Activated naive CD4-positive, alpha-beta T cell treated with anti-CD3 and anti-CD28 coated beads for 36 hours (primary cell): ENCODE measurements at regions of chr7 and their contacts with region 1.

Region 1: DNA sequence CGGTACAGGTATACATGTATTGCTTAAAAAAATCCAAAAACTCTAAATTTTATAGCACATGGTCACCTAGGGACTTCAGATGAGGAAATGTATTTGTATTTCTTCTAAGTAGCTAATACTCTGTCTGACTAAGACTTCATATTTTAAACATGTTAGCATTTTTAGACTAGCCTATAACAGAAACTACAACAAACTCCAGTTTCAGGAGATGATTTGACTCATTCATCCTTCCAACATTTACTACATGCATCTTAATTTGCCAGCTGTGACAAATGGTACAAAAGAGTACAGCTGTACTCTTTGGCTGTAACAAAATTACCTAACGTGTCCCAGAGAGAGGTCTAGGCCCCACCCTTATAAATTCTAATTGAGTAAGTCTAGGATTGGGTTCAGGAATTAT is 22.2 kb downstream of the TMEM209 start:
- DNase-seq: no peak
- H3K4me3 Mint-ChIP-seq: no peak overlapping the region
- H3K27ac Mint-ChIP-seq: peak overlapping the region; percentile 65
- H3K4me1 Mint-ChIP-seq: peaks cover 30% of the 10 kb centered on the region
- H3K27me3 Mint-ChIP-seq: no peaks in the 10 kb centered on the region

Region 2: DNA sequence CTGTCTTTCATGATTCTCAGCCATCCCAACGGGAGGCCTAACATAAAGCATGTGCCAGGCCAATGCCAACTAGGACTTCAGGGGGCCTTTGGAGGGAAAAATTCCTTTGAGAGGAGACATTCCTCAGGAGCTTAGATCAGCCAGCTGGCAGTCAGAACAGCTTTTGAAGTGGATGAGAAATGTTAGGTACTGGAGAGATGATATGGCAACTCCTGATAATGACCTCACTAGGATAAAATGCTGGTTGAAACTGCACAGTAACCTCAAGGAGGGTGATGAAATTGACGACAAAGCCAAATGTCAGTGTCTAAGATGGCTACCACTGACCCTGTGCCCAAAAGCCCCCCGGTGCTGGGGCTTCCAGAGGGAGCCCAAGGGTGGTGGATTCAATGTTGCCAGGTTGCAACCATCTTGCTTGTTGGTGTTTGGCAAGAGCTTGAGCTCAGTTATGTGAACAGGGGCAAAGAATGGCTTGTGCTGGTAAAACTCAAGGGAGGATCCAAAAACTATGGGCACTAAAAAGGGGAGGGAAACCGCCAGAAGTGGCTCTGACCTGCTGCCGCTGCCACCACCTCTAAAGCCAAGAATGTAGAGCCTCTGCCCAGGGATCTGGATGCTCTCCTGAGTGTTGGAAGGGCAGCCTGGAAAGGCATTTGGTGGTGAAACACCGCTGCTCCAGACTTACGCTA is 351.4 kb before region 1 on chr7:
- CTCF ChIA-PET with region 1: no interaction called
- intact Hi-C with region 1: no loop called
- DNase-seq: no peak
- H3K4me3 Mint-ChIP-seq: no peak overlapping the region
- H3K27ac Mint-ChIP-seq: no peak overlapping the region
- H3K4me1 Mint-ChIP-seq: peaks cover 13% of the 10 kb centered on the region
- H3K27me3 Mint-ChIP-seq: no peaks in the 10 kb centered on the region

Region 3: GRCh38 chr7:130205084-130205947 is 22.3 kb after region 1 on chr7 and contains the start of gene TMEM209:
- CTCF ChIA-PET with region 1: interaction called, 4 read pairs
- intact Hi-C with region 1: loop called (anchors 1 kb)
- DNase-seq: peak; percentile 97
- H3K4me3 Mint-ChIP-seq: peak within 1 kb of the TSS; percentile 98
- H3K27ac Mint-ChIP-seq: peak within 1 kb of the TSS; percentile 98
- H3K4me1 Mint-ChIP-seq: peaks cover 33% of the 10 kb centered on the region
- H3K27me3 Mint-ChIP-seq: no peaks in the 10 kb centered on the region
- total RNA-seq, gene TMEM209: 36.0 to 37.3 TPM

Region 4: DNA sequence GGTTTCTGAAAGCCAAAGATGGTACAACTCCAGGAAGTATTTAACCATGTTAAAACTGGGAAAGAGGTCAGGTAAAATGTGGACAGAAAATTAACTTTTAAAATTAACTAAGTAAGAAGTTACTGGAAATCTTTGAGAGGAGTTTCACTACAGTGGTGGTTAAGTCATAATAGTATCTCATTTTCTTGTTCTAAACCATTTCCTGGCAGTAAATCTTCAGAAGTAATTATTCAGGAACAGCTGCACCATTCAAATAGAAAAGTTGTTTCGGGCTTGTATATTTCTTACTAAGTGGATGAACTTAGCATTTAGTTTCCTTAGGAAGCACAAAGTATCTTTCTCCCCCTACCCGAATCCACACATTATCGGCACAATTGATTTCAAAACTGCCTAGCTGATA is 458.5 kb after region 1 on chr7:
- CTCF ChIA-PET with region 1: no interaction called
- intact Hi-C with region 1: loop called (anchors 2 kb)
- DNase-seq: no peak
- H3K4me3 Mint-ChIP-seq: no peak overlapping the region
- H3K27ac Mint-ChIP-seq: peak overlapping the region; percentile 65
- H3K4me1 Mint-ChIP-seq: peaks cover 18% of the 10 kb centered on the region
- H3K27me3 Mint-ChIP-seq: no peaks in the 10 kb centered on the region

Region 5: DNA sequence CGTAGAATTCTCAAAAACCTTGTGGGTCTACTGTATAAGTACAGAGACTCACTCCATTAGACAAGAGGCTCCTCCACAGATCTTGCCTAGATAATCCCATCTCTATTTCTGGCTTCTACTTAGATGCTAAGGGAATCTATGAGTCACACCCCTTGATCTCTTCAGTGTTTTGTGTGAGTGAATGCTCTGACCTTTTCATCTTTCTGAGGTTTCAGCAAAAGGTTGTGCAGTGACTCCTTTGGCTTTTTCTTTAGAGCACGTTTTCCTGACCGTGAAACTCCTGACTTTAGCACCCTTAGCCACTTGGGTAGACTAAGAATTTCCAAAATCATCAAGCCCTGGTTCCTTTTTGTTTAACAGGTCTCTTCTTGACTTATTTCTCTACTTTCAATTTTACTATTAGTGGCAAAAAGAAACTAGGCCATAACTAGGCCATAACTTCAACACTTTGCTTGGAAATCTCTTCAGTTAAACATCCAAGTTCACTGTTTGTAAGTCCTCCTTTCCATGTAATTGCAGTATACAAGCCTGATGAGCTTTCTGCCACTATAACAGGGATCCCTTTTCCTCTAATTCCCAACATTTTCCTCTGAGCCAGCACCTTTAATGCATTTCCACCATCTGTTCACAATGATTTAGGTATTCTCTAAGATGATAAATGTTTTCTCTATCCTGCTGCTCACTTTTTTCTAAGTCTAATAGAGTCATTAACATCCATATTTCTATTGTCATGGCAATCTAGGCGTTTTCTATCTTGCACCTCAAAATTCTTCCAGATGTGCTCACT is 466.2 kb after region 1 on chr7:
- CTCF ChIA-PET with region 1: no interaction called
- intact Hi-C with region 1: loop called (anchors 1 kb)
- DNase-seq: peak; percentile 53
- H3K4me3 Mint-ChIP-seq: no peak overlapping the region
- H3K27ac Mint-ChIP-seq: peak overlapping the region; percentile 79
- H3K4me1 Mint-ChIP-seq: peaks cover 29% of the 10 kb centered on the region
- H3K27me3 Mint-ChIP-seq: no peaks in the 10 kb centered on the region

Region 6: GRCh38 chr7:131027287-131027773 is 844.3 kb after region 1 on chr7:
- CTCF ChIA-PET with region 1: no interaction called
- intact Hi-C with region 1: loop called (anchors 10 kb)
- DNase-seq: peak; percentile 52
- H3K4me3 Mint-ChIP-seq: no peak overlapping the region
- H3K27ac Mint-ChIP-seq: peak overlapping the region; percentile 74
- H3K4me1 Mint-ChIP-seq: peaks cover 86% of the 10 kb centered on the region
- H3K27me3 Mint-ChIP-seq: no peaks in the 10 kb centered on the region